ENCODE measurements at regions of chr19 and their contacts with region 1.

Region 1: GRCh38 chr19:13952154-13953035 is at the start of gene DCAF15:
- DNase-seq: peak; percentile 100
- H3K4me3 ChIP-seq: peak within 1 kb of the TSS; percentile 89 to 96 (median 92)
- H3K27ac ChIP-seq: peak within 1 kb of the TSS; percentile 84 to 88 (median 88)
- H3K4me1 ChIP-seq: peaks cover 0 to 21% (median 15%) of the 10 kb centered on the region in 4 donors
- H3K27me3 ChIP-seq: no peaks in the 10 kb centered on the region
- CTCF ChIP-seq: no peak
- EP300 ChIP-seq: no peak
- POLR2A ChIP-seq: peak in 1 of 2 donors; percentile 23
- total RNA-seq, gene DCAF15: 7.9 to 14.6 (median 12.1) TPM

Region 2: GRCh38 chr19:13784731-13785452 is 167.5 kb before region 1 on chr19:
- intact Hi-C with region 1: loop called (anchors 5 kb)
- DNase-seq: peak; percentile 83
- H3K4me3 ChIP-seq: no peak overlapping the region
- H3K27ac ChIP-seq: peak overlapping the region in 3 of 4 donors; percentile 9 to 59 (median 25)
- H3K4me1 ChIP-seq: peaks cover 0 to 52% (median 33%) of the 10 kb centered on the region in 4 donors
- H3K27me3 ChIP-seq: no peaks in the 10 kb centered on the region
- CTCF ChIP-seq: peak in 3 of 4 experiments; percentile 56 to 70 (median 60)
- EP300 ChIP-seq: no peak
- POLR2A ChIP-seq: no peak

Region 3: GRCh38 chr19:13817615-13818371 is 134.6 kb before region 1 on chr19:
- intact Hi-C with region 1: no loop called
- DNase-seq: no peak
- H3K4me3 ChIP-seq: no peak overlapping the region
- H3K27ac ChIP-seq: no peak overlapping the region
- H3K4me1 ChIP-seq: peaks cover 0 to 14% (median 2%) of the 10 kb centered on the region in 4 donors
- H3K27me3 ChIP-seq: no peaks in the 10 kb centered on the region
- CTCF ChIP-seq: no peak
- EP300 ChIP-seq: no peak
- POLR2A ChIP-seq: no peak

Region 4: DNA sequence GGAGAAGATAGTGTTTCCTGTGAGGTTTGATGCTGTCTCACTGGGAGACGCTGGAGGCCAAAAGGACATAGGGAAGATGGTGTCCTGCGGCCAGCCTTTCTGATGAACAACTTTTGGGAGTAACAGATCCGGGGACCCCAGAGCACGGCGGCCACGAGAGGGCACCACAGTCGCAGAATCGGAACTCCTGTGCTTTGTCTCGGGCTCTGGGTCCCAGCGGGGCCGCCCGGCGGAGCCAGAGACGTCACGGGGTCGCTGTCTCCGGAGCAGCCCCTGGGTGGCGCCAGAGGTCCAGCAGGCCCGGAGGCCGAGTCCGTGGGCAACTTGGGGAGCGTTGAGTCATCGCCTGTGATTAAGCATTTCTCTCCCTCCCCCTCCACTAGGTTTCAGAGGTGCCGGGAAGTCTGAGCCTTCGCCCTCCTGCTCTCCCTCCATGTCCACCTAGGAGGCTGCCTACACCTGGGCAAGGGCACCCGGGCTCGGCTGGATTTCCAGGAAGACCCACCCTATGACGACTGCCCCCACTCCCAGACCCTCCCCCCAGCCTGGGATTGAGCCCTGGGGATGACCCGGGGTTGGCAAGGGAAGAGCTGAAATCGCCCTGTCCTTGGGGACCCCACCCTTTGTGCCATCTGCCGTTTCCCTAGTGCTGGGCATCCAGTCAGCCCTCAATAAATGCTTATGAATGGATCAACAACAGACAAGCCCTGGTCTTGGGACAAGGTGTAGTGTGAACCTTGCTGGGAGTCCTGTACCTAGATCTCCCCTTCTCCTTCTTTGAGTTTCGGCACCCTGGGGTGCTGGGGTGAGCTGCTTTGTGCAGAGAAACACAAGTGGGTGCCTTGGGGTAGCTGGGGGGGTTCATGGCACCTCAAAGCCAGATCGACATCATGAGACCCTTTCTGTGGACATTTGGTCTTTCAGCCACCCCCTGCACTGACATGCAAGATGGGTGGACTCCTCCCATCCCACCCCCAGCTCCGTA is 72.0 kb before region 1 on chr19:
- intact Hi-C with region 1: loop called (anchors 1 kb)
- DNase-seq: peak; percentile 99
- H3K4me3 ChIP-seq: peak overlapping the region in 3 of 4 donors; percentile 24 to 37 (median 33)
- H3K27ac ChIP-seq: peak overlapping the region; percentile 67 to 76 (median 72)
- H3K4me1 ChIP-seq: peaks cover 0 to 30% (median 18%) of the 10 kb centered on the region in 4 donors
- H3K27me3 ChIP-seq: no peaks in the 10 kb centered on the region
- CTCF ChIP-seq: peak; percentile 98 to 100 (median 99)
- EP300 ChIP-seq: peak in 1 of 4 donors; percentile 20
- POLR2A ChIP-seq: no peak

Region 5: DNA sequence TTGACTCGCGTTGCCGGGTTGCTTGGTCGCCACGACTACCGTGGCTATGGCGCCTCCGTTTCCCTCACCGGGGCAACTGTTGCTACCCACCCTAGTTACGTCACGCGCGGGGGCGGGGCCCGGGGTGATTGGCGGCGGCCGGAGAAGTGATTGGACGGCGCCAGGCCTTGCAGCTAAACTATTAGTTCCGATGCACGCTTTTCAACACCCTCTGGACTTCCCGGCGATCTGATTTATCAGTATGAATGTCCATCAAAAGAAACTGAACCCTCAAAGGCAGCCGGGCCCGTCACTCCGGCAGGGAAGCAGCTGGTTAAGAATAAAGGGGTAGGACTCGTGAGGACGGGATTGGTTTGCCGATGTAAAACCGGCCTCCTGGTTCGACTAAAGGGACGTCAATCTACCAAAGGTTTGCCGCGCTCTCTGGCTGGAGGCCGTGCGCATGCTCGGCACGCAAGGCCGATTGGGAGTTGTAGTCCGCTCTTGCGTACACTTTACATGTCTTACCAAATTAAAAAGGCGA is 53.9 kb after region 1 on chr19 and contains the start of gene RFX1:
- intact Hi-C with region 1: loop called (anchors 1 kb)
- DNase-seq: peak; percentile 100
- H3K4me3 ChIP-seq: peak within 1 kb of the TSS; percentile 73 to 97 (median 96)
- H3K27ac ChIP-seq: peak within 1 kb of the TSS; percentile 98 to 100 (median 99)
- H3K4me1 ChIP-seq: peaks cover 0 to 30% (median 24%) of the 10 kb centered on the region in 4 donors
- H3K27me3 ChIP-seq: no peaks in the 10 kb centered on the region
- CTCF ChIP-seq: no peak
- EP300 ChIP-seq: peak in 1 of 4 donors; percentile 46
- POLR2A ChIP-seq: no peak
- total RNA-seq, gene RFX1: 1.6 to 5.0 (median 1.9) TPM